ENCODE measurements at regions of chr7 and their contacts with region 1.

Region 1: GRCh38 chr7:37208528-37208927 is 240.1 kb downstream of the ELMO1 start:
- DNase-seq: peak; percentile 73
- H3K4me3 ChIP-seq: no peak overlapping the region
- H3K27ac ChIP-seq: peak overlapping the region in 1 of 2 experiments; percentile 29; a peak in 1 of 4 replicates
- H3K4me1 ChIP-seq: peaks cover 0 to 3% of the 10 kb centered on the region in 2 experiments; a peak in 2 of 4 replicates
- H3K27me3 ChIP-seq: no peaks in the 10 kb centered on the region
- CTCF ChIP-seq: peak; percentile 61
- EP300 ChIP-seq: no peak
- RAD21 ChIP-seq: peak; percentile 98

Region 2: DNA sequence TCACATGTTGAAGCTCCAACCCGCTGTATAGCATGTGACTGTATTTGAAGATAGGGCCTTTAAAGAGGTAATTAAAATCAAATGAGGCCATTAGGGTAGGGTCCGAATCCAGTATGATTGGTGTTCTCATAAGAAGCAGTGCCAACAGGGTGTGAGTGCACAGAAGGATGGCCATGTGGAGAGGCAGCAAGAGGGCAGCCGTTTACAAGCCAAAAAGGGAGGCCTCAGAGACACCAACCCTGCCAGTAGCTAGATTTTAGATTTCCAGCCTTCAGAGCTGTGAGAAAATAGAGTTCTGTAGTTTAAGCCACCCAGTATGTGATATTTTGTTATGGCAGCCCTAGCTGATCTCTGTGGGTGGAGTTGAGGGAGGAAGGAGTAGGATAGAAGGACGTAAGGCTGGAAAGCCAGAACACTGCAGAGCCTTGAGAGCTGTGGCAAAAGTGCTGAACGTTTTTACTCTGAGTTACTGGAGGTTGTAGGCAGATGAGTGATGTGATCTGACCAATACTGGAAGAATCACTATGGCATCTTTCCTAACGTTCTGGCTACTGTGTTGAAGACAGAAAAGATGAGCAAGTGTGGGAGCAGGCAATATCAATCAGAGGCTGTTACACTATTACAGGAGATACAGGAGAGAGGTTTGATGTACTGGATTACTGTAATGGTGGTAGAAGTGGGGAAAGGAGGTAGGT is 94.7 kb before region 1 on chr7:
- CTCF ChIA-PET with region 1: no interaction called
- POLR2A ChIA-PET with region 1: no interaction called
- DNase-seq: no peak
- H3K4me3 ChIP-seq: no peak overlapping the region
- H3K27ac ChIP-seq: no peak overlapping the region
- H3K4me1 ChIP-seq: peaks cover 0 to 5% of the 10 kb centered on the region in 2 experiments; a peak in 1 of 4 replicates
- H3K27me3 ChIP-seq: no peaks in the 10 kb centered on the region
- CTCF ChIP-seq: no peak
- EP300 ChIP-seq: no peak
- RAD21 ChIP-seq: no peak

Region 3: DNA sequence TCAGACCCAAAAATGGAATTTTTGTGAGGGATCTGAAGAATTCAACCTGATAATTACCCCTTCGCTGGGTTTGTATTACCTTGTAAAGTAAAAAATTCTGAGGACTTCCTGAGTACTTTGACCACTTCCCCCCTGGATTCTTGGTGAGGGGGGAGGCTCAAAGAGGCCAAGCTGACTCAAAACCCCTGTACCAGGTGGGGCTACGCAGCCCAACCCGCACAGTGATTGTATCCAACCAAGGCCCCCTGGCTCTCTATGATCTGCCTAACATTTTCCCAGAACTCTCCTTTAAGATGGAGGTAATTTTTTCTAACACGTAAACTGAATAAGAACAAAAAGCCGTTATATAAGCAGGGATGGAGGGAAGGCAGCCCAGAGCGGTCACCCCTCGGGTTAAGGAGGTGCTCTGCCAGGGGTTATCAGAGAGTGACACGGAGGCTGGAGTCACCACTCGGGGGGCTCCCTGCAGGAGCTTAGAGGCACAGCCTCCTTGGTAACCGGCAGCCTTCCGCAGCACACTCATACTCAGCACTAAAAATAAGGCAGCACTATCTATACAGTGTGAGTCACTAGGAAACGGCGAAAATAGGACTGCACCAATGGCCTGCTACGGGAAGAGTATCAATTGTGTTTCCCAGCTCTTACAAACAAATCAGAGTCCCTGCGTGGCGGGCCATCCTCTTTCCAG is 15.3 kb before region 1 on chr7:
- CTCF ChIA-PET with region 1: interaction called, 43 read pairs
- POLR2A ChIA-PET with region 1: no interaction called
- DNase-seq: no peak
- H3K4me3 ChIP-seq: no peak overlapping the region
- H3K27ac ChIP-seq: no peak overlapping the region
- H3K4me1 ChIP-seq: peaks cover 0 to 6% of the 10 kb centered on the region in 2 experiments; a peak in 2 of 4 replicates
- H3K27me3 ChIP-seq: no peaks in the 10 kb centered on the region
- CTCF ChIP-seq: no peak
- EP300 ChIP-seq: no peak
- RAD21 ChIP-seq: no peak

Region 4: GRCh38 chr7:37225285-37225969 is 16.9 kb after region 1 on chr7:
- CTCF ChIA-PET with region 1: interaction called, 22 read pairs
- POLR2A ChIA-PET with region 1: no interaction called
- DNase-seq: no peak
- H3K4me3 ChIP-seq: no peak overlapping the region
- H3K27ac ChIP-seq: no peak overlapping the region
- H3K4me1 ChIP-seq: peaks cover 0 to 2% of the 10 kb centered on the region in 2 experiments; a peak in 2 of 4 replicates
- H3K27me3 ChIP-seq: no peaks in the 10 kb centered on the region
- CTCF ChIP-seq: no peak
- EP300 ChIP-seq: no peak
- RAD21 ChIP-seq: no peak

Region 5: GRCh38 chr7:37504801-37505200 is 296.3 kb after region 1 on chr7:
- CTCF ChIA-PET with region 1: interaction called, 21 read pairs
- POLR2A ChIA-PET with region 1: no interaction called
- DNase-seq: no peak
- H3K4me3 ChIP-seq: no peak overlapping the region
- H3K27ac ChIP-seq: no peak overlapping the region
- H3K4me1 ChIP-seq: no peaks in the 10 kb centered on the region; a peak in 1 of 4 replicates
- H3K27me3 ChIP-seq: no peaks in the 10 kb centered on the region
- CTCF ChIP-seq: no peak
- EP300 ChIP-seq: no peak
- RAD21 ChIP-seq: no peak

Region 6: DNA sequence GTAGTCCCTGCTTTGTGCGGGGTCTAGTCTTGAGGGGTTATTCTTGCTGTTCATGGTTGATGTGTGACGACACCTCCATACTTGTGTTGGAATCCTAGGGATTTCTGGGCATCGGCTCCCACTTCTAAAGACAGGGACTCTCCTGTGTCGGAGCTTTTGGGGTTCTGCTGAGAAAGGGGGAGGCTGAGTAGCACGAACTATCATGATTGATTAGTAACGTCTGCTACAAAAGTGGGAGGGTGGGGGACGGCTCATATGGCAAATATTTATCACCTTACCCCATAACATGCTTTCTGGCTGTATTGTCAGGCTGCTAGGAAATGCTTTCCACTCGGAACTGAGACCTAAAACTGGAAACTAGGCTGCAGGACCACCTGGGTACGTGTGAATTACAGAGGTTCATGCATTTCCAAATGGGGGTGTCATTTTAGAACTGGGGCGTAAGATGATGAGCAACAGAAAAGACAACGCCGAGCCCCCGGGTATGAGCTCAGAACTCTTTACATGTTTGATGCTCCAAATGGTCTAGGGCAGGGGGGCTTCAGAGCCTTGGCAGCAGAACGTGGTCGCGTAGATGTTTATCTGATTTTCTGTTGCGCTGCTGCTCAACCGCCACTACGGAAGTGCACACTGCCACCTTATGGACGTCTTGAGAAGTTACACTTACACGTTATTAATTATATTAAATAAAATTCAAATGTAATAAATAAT is 624.7 kb after region 1 on chr7:
- CTCF ChIA-PET with region 1: interaction called, 36 read pairs
- POLR2A ChIA-PET with region 1: no interaction called
- DNase-seq: peak; percentile 60
- H3K4me3 ChIP-seq: peak overlapping the region; percentile 5 to 21; a peak in 1 of 4 replicates
- H3K27ac ChIP-seq: no peak overlapping the region
- H3K4me1 ChIP-seq: peaks cover 0 to 9% of the 10 kb centered on the region in 2 experiments; a peak in 1 of 4 replicates
- H3K27me3 ChIP-seq: no peaks in the 10 kb centered on the region
- CTCF ChIP-seq: peak; percentile 66
- EP300 ChIP-seq: no peak
- RAD21 ChIP-seq: peak; percentile 80

Measured in SK-N-SH (cell line).